ENCODE measurements at regions of chr9 and their contacts with region 1.

Region 1: DNA sequence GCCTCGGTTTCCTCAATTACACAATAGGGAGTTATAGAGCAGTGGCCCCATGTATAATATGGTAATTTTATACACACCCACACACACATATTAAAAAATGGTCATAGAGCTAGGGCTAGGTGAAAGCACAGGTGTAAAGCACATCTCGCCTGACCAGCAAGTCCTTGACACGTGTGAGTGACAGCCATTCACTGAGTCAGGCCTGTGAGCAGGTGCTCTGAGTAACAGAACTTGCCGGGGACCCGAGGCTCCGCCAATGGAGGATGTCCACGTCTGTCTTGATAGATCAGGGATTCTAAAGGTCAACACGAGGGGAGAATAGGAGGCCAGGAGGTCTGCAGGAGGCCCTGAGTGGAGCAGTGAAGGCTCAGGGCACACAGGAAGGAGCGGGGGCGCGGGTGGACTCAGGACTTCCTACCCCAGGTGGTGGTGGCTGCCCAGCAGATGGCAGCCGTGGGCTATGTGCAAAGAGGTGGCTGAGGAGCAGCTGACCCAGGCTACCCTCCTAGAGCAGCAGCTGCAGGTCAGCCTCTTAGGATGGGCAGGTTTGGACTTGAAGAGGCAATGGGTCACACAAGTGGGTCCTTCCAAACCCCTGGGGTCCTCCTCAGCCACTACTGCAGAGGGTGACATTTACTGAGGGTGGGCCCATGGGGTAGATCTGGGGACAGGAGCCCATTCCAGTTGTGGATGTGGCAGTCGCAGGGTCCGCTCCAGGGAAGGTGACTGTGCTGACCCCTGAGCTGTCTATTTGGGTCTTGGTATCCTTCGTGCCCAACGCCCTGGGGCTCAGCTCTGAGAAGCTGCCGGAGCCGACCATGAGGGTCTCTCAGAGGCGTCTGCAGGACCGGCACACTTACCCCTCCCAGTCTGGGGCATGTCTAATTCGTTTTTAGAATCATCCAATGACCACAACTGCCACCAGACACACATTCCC is 45.9 kb downstream of the PRRT1B start:
- DNase-seq: peak; percentile 56 to 88 (median 79)
- ATAC-seq: peak; percentile 91
- H3K4me3 ChIP-seq: no peak overlapping the region
- H3K4me3 Mint-ChIP-seq: no peak overlapping the region
- H3K27ac ChIP-seq: peak overlapping the region in 1 of 2 experiments; percentile 19
- H3K27ac Mint-ChIP-seq: peak overlapping the region; percentile 88
- H3K4me1 ChIP-seq: peaks cover 18% of the 10 kb centered on the region
- H3K4me1 Mint-ChIP-seq: peaks cover 23% of the 10 kb centered on the region
- H3K27me3 ChIP-seq: no peaks in the 10 kb centered on the region
- H3K27me3 Mint-ChIP-seq: no peaks in the 10 kb centered on the region
- CTCF ChIP-seq: peak; percentile 83

Region 2: DNA sequence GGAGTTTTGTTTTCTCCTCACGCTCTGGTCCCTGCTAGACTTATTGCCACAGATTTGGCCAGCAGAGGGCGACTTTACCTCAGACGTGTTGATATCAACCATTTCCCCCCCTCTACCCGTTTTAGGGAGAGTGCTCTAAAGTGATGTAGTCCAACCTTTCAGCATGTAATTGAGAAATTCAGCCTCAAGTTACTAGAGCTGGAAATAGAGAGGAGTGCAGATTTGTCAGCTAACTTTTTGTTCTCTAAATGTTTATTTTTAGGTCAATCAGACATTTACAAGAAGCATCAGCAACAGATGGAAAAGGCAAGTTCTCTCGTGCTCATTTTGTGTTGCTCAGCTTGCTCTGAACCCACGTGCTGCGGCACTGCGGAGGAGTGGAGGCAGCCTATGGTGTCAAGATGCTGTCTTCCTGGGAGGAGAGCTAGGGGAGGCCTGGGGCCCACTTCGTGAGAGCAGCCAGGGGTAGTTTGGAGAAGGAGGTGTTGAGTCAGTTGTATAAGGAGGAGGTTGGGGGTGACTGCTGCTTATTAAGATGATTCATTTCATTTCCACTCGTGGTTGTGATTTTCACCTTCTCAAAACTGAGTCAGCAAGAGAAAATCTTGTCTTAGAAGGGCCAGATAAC is 1483.8 kb before region 1 on chr9:
- CTCF ChIA-PET with region 1: no interaction called
- POLR2A ChIA-PET with region 1: no interaction called
- intact Hi-C with region 1: no loop called
- DNase-seq: peak; percentile 68 to 91 (median 87)
- ATAC-seq: peak; percentile 90
- H3K4me3 ChIP-seq: no peak overlapping the region
- H3K4me3 Mint-ChIP-seq: no peak overlapping the region
- H3K27ac ChIP-seq: peak overlapping the region in 1 of 2 experiments; percentile 26
- H3K27ac Mint-ChIP-seq: peak overlapping the region; percentile 72
- H3K4me1 ChIP-seq: peaks cover 8% of the 10 kb centered on the region
- H3K4me1 Mint-ChIP-seq: peaks cover 14% of the 10 kb centered on the region
- H3K27me3 ChIP-seq: no peaks in the 10 kb centered on the region
- H3K27me3 Mint-ChIP-seq: no peaks in the 10 kb centered on the region
- CTCF ChIP-seq: peak; percentile 86

Region 3: DNA sequence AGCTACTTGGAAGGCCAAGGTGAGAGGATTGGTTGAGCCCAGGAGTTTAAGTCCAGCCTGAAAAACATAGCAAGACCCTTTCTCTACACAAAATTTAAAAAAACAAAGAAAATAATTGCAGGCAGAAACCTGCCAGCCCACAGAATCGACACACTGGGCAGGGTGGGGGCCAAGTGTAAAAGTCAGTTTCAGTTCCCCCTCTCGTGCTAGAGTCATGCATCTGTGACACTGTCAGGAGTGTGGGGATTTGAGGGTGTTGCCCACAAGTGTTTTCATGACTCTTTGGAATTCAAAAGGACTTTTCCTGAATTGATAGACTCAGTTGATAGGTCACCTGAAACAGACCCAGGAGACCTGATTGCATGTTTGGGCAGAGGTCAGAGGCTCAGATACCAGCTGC is 149.7 kb before region 1 on chr9:
- CTCF ChIA-PET with region 1: no interaction called
- POLR2A ChIA-PET with region 1: no interaction called
- intact Hi-C with region 1: no loop called
- DNase-seq: peak in 2 of 9 experiments; percentile 33 to 53
- ATAC-seq: no peak
- H3K4me3 ChIP-seq: no peak overlapping the region
- H3K4me3 Mint-ChIP-seq: no peak overlapping the region
- H3K27ac ChIP-seq: peak overlapping the region in 1 of 2 experiments; percentile 33
- H3K27ac Mint-ChIP-seq: peak overlapping the region; percentile 38
- H3K4me1 ChIP-seq: no peaks in the 10 kb centered on the region
- H3K4me1 Mint-ChIP-seq: peaks cover 19% of the 10 kb centered on the region
- H3K27me3 ChIP-seq: no peaks in the 10 kb centered on the region
- H3K27me3 Mint-ChIP-seq: no peaks in the 10 kb centered on the region
- CTCF ChIP-seq: no peak

Region 4: DNA sequence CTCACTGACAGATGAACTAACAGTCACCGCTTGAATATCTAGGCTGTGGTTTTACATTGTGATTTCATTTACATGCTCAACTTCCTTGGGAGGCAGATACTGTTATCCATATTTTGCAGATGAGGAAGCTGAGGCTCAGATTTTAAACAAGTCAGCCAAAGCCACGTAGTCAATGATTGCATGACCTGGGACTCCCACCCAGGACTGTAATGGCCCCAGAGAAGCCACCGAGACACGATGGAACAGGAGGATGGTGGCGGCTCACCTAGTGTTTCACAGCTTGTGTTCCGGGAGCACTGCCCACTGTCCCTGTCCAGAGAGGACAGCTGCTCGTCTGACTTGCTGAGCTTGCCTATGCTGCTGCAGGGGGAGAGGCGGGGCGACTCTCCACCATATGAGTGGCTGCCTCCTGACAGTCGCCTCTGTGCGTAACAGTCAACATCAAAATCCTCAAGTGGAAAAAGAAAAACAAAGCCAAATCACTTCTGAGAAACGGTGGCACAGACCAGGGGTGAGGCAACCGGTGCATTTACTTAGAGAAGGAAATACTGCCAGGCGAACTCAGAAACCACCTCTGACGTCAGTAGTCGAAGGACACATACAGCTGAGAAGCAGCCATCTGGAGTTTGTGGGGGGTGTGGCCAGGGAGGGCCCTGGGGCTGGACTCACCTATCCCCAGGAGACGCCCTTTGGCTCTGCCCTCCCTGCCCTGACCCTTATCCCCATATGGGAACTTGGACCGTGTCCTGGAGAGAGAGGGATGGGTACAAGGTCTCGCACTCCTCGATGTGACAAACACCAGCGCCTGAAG is 36.7 kb after region 1 on chr9:
- CTCF ChIA-PET with region 1: interaction called, 3 read pairs
- POLR2A ChIA-PET with region 1: no interaction called
- intact Hi-C with region 1: loop called in 1 of 2 experiments (anchors 5 kb)
- DNase-seq: peak in 8 of 9 experiments; percentile 39 to 96 (median 72)
- ATAC-seq: peak; percentile 79
- H3K4me3 ChIP-seq: peak overlapping the region; percentile 7 to 29
- H3K4me3 Mint-ChIP-seq: peak overlapping the region; percentile 39
- H3K27ac ChIP-seq: peak overlapping the region; percentile 77 to 89
- H3K27ac Mint-ChIP-seq: peak overlapping the region; percentile 93
- H3K4me1 ChIP-seq: peaks cover 27% of the 10 kb centered on the region
- H3K4me1 Mint-ChIP-seq: peaks cover 34% of the 10 kb centered on the region
- H3K27me3 ChIP-seq: no peaks in the 10 kb centered on the region
- H3K27me3 Mint-ChIP-seq: no peaks in the 10 kb centered on the region
- CTCF ChIP-seq: no peak

Region 5: DNA sequence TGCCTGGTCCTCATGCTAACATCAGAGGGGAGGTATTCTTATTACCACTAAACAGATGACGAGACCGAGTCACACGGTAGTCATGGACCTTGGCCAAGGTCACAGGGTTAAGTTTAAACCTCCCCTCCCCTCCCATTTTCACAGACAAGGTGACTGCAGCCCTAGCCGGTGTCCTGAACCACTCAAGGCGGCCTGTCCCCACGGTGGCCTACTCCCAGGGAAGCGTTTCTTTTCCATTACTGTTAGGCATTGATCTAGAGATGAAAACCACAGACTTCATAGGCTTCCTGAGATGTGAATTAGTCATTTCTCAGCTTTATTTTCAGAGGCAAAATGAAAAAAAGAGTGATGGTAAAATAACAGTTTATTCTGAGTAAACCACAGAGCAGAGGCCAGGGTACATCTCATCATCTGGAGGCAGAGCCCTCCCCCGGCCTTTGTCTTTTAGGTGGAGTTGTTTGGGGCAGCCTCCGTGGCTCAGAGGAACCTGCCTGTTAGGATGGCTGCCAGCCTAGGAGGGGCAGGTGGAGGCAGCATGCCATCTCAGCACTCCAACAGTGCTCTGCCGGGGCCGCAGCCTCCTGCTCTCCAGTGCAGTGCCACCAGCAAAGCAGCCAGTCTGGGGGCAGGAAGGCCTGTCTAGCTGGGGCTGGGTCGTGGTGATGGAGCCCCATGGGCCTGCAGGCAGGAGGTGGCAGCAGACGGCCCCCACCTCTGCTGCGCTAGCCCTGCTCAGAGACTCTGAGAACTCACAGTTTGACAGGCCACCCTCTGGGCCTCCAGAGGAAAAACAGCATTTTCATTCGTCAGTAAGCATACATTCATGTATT is 77.5 kb after region 1 on chr9:
- CTCF ChIA-PET with region 1: interaction called, 3 read pairs
- POLR2A ChIA-PET with region 1: no interaction called
- intact Hi-C with region 1: loop called (anchors 2 to 5 kb)
- DNase-seq: peak; percentile 41 to 88 (median 73)
- ATAC-seq: peak; percentile 74
- H3K4me3 ChIP-seq: peak overlapping the region; percentile 23 to 29
- H3K4me3 Mint-ChIP-seq: peak overlapping the region; percentile 63
- H3K27ac ChIP-seq: peak overlapping the region; percentile 64 to 94
- H3K27ac Mint-ChIP-seq: peak overlapping the region; percentile 99
- H3K4me1 ChIP-seq: peaks cover 73% of the 10 kb centered on the region
- H3K4me1 Mint-ChIP-seq: peaks cover 83% of the 10 kb centered on the region
- H3K27me3 ChIP-seq: no peaks in the 10 kb centered on the region
- H3K27me3 Mint-ChIP-seq: no peaks in the 10 kb centered on the region
- CTCF ChIP-seq: no peak

Region 6: DNA sequence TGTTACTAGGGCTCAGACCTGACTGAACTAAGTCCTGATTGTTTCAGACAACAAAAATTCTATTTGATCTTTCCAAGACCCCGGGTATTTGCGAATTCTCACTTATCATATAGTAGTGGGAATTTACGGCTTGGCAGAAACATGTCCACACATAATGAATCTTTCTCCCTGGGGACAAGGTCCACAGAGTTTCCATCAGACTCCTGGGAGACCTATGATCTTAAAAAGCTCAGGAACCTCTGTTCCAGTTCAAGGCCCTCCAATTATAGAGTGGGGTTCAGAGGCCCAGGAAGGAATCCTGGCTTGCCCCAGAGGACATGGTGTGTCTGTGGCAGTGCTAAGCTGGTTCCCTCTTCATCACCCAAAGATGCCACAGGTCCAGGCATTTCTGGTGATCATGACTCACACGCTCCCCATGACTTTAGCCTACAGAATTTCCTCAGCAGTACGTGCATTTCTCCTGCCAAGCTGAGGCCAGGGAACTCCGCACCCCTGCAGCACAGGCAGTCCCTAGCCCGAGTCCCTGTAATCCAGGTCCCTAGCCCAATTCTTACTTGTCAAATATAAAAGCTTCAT is 136.1 kb after region 1 on chr9:
- CTCF ChIA-PET with region 1: interaction called, 11 read pairs
- POLR2A ChIA-PET with region 1: no interaction called
- intact Hi-C with region 1: no loop called
- DNase-seq: peak in 1 of 9 experiments; percentile 52
- ATAC-seq: no peak
- H3K4me3 ChIP-seq: no peak overlapping the region
- H3K4me3 Mint-ChIP-seq: peak overlapping the region; percentile 70
- H3K27ac ChIP-seq: peak overlapping the region; percentile 12 to 92
- H3K27ac Mint-ChIP-seq: peak overlapping the region; percentile 98
- H3K4me1 ChIP-seq: peaks cover 71% of the 10 kb centered on the region
- H3K4me1 Mint-ChIP-seq: peaks cover 78% of the 10 kb centered on the region
- H3K27me3 ChIP-seq: no peaks in the 10 kb centered on the region
- H3K27me3 Mint-ChIP-seq: no peaks in the 10 kb centered on the region
- CTCF ChIP-seq: no peak

Region 7: DNA sequence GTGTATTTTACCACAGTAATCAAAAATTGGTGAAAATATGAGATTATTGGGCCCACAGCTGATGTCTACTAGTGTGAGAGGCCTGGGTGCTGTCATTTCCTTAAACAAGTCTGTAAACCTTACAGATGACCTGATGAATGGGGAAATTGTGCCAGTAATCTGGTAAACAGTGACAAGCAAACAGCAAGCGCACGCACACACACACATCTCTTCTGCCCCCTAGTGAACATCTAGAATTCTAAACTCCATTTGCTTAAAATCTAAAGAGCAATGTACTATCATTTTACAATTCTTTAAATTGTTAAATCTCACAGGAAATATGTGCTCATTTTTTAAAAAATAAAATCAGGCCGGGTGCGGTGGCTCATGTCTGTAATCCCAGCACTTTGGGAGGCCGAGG is 156.2 kb after region 1 on chr9:
- CTCF ChIA-PET with region 1: interaction called, 151 read pairs
- POLR2A ChIA-PET with region 1: interaction called, 5 read pairs
- intact Hi-C with region 1: loop called in 1 of 2 experiments (anchors 1 kb)
- DNase-seq: peak in 4 of 9 experiments; percentile 33 to 73 (median 49)
- ATAC-seq: peak; percentile 50
- H3K4me3 ChIP-seq: no peak overlapping the region
- H3K4me3 Mint-ChIP-seq: no peak overlapping the region
- H3K27ac ChIP-seq: no peak overlapping the region
- H3K27ac Mint-ChIP-seq: peak overlapping the region; percentile 39
- H3K4me1 ChIP-seq: peaks cover 23% of the 10 kb centered on the region
- H3K4me1 Mint-ChIP-seq: peaks cover 36% of the 10 kb centered on the region
- H3K27me3 ChIP-seq: no peaks in the 10 kb centered on the region
- H3K27me3 Mint-ChIP-seq: no peaks in the 10 kb centered on the region
- CTCF ChIP-seq: peak; percentile 39

Measured in CD8-positive, alpha-beta T cell (primary cell).